PC-3 (cell line): ENCODE measurements at regions of chr7 and their contacts with region 1.

Region 1: GRCh38 chr7:73606801-73607691 is 17.3 kb downstream of the MLXIPL start:
- DNase-seq: peak; percentile 55
- ATAC-seq: peak; percentile 80
- H3K4me3 ChIP-seq: no peak overlapping the region
- H3K27ac ChIP-seq: no peak overlapping the region
- H3K4me1 ChIP-seq: no peaks in the 10 kb centered on the region
- H3K27me3 ChIP-seq: no peaks in the 10 kb centered on the region
- CTCF ChIP-seq: peak; percentile 94

Region 2: GRCh38 chr7:73436031-73436828 is 170.8 kb before region 1 on chr7:
- CTCF ChIA-PET with region 1: no interaction called
- POLR2A ChIA-PET with region 1: interaction called, 40 read pairs
- intact Hi-C with region 1: no loop called
- DNase-seq: peak; percentile 55
- ATAC-seq: peak; percentile 79
- H3K4me3 ChIP-seq: no peak overlapping the region
- H3K27ac ChIP-seq: no peak overlapping the region
- H3K4me1 ChIP-seq: peaks cover 9% of the 10 kb centered on the region; the same call in 1 of the 2 replicates
- H3K27me3 ChIP-seq: no peaks in the 10 kb centered on the region
- CTCF ChIP-seq: peak; percentile 45; the same call in 1 of the 2 replicates

Region 3: DNA sequence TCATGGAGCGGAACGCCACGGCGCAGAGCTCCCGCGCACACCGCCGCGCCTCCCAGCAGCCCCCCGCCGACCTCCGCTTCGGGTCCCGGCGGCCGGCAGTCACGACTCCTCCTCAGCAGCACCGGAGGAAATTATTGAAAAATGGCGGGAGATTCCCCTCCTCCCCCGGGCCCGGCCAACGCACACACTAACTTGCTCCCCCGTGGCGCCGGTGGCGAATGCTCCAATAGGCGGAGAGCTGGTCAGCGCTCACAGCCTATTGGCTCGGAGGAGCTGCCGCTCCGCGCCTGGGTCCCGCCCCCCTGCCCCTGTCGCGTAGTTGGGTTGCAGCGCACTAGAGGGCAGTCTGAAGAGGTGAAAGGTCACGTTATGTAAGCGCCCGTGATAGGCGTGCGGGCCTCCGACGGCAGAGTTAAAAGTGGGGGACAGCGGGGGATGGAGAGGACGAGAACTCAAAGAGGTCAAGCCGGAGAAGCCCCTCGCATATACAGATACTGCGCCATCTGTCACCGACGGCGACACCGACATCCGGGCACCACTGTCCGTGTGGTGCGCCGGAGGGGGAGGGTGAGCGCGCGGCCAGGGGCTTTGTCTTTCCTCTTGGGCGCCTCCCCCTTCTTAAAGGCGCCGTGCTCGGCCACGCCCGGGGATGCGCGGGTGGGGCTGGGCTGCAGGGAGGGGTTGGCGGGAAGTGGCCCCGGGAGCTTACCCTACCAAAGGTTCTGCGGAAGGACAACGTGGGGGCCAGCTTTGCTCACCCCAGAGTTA is 84.8 kb before region 1 on chr7 and contains the start of gene BAZ1B:
- CTCF ChIA-PET with region 1: no interaction called
- POLR2A ChIA-PET with region 1: interaction called, 14 read pairs
- intact Hi-C with region 1: no loop called
- DNase-seq: peak; percentile 96
- ATAC-seq: peak; percentile 92
- H3K4me3 ChIP-seq: peak within 1 kb of the TSS; percentile 82
- H3K27ac ChIP-seq: peak within 1 kb of the TSS; percentile 84
- H3K4me1 ChIP-seq: peaks cover 19% of the 10 kb centered on the region; the same call in 1 of the 2 replicates
- H3K27me3 ChIP-seq: no peaks in the 10 kb centered on the region
- CTCF ChIP-seq: no peak
- total RNA-seq, gene BAZ1B: 45.5 and 62.5 TPM in 2 replicates

Region 4: GRCh38 chr7:73557108-73557396 is 50.0 kb before region 1 on chr7:
- CTCF ChIA-PET with region 1: no interaction called
- POLR2A ChIA-PET with region 1: interaction called, 19 read pairs
- intact Hi-C with region 1: no loop called
- DNase-seq: peak; percentile 94
- ATAC-seq: peak; percentile 90
- H3K4me3 ChIP-seq: peak overlapping the region; percentile 81
- H3K27ac ChIP-seq: peak overlapping the region; percentile 95
- H3K4me1 ChIP-seq: peaks cover 18% of the 10 kb centered on the region
- H3K27me3 ChIP-seq: no peaks in the 10 kb centered on the region
- CTCF ChIP-seq: no peak

Region 5: GRCh38 chr7:73667344-73668102 is 60.5 kb after region 1 on chr7 and contains the start of gene VPS37D:
- CTCF ChIA-PET with region 1: interaction called, 4 read pairs
- POLR2A ChIA-PET with region 1: no interaction called
- intact Hi-C with region 1: loop called (anchors 2 kb)
- DNase-seq: peak; percentile 89
- ATAC-seq: peak; percentile 84
- H3K4me3 ChIP-seq: peak within 1 kb of the TSS; percentile 77
- H3K27ac ChIP-seq: no peak within 1 kb of the TSS
- H3K4me1 ChIP-seq: peaks cover 4% of the 10 kb centered on the region; the same call in 1 of the 2 replicates
- H3K27me3 ChIP-seq: no peaks in the 10 kb centered on the region
- CTCF ChIP-seq: peak; percentile 53
- total RNA-seq, gene VPS37D: 6.3 and 7.7 TPM in 2 replicates

Region 6: GRCh38 chr7:73726083-73726466 is 119.0 kb after region 1 on chr7:
- CTCF ChIA-PET with region 1: interaction called, 13 read pairs
- POLR2A ChIA-PET with region 1: interaction called, 3 read pairs
- intact Hi-C with region 1: loop called (anchors 1 kb)
- DNase-seq: no peak
- ATAC-seq: no peak
- H3K4me3 ChIP-seq: no peak overlapping the region
- H3K27ac ChIP-seq: no peak overlapping the region
- H3K4me1 ChIP-seq: peaks cover 13% of the 10 kb centered on the region
- H3K27me3 ChIP-seq: no peaks in the 10 kb centered on the region
- CTCF ChIP-seq: 0 out of 2 replicates have a peak, but pooled peaks have one; percentile 3

Region 7: DNA sequence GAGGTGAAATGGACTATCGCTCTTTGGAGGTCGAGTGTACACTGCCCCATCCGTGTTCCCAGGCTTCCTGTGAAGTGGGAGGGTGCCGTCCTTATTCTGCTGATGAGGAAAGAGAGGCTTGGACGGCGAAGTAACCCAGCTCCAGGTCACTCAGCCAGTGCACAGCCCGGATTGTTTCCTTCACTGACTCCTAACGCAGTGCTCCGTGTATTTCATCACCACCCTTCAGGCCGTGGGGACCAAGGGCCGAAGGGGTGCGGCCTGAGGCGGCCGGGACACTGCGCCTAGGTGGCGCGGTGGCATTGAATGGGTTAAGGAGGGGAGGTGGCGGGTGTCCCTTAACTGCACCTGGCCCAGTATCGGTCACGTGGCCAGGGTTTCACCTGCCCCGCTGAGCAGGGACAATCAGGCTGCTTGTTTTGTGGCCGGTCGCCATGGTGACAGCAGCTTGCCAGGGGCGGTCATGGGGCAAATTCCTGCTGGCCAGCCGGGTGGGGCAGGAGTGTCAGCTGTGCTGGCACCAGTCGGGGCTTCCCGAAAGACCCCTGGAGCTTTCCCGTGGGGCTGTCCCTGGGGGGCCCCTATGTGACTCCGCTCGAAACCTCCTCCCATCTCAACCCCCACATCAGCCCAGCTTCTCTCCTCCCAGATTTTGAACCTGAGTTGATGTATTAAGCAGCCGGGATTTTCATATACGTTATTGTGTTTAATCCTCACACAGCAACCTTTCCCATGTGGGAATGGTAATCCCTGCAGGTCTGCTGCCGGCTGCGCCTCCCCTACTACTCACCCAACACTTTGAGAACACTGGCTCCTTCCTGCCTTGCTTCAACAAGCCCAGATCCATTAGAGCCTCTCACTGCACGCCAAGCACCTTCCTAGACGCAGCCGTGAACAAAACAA is 135.9 kb after region 1 on chr7:
- CTCF ChIA-PET with region 1: no interaction called
- POLR2A ChIA-PET with region 1: no interaction called
- intact Hi-C with region 1: no loop called
- DNase-seq: peak; percentile 48
- ATAC-seq: no peak
- H3K4me3 ChIP-seq: no peak overlapping the region
- H3K27ac ChIP-seq: peak overlapping the region; percentile 59
- H3K4me1 ChIP-seq: peaks cover 22% of the 10 kb centered on the region
- H3K27me3 ChIP-seq: no peaks in the 10 kb centered on the region
- CTCF ChIP-seq: no peak